ENCODE measurements at regions of chr18 and their contacts with region 1.

Region 1: GRCh38 chr18:50819728-50820378 is at the start of gene MRO:
- DNase-seq: peak; percentile 88 to 89
- H3K4me3 ChIP-seq: peak within 1 kb of the TSS in 2 of 3 donors; percentile 4 to 17
- H3K27ac ChIP-seq: peak within 1 kb of the TSS; percentile 71 to 87 (median 83)
- H3K4me1 ChIP-seq: peaks cover 41 to 46% of the 10 kb centered on the region in 2 donors
- H3K27me3 ChIP-seq: no peaks in the 10 kb centered on the region
- CTCF ChIP-seq: peak; percentile 58 to 97 (median 92)
- POLR2A ChIP-seq: no peak
- total RNA-seq, gene MRO: 3.9 to 13.3 (median 11.2) TPM

Region 2: DNA sequence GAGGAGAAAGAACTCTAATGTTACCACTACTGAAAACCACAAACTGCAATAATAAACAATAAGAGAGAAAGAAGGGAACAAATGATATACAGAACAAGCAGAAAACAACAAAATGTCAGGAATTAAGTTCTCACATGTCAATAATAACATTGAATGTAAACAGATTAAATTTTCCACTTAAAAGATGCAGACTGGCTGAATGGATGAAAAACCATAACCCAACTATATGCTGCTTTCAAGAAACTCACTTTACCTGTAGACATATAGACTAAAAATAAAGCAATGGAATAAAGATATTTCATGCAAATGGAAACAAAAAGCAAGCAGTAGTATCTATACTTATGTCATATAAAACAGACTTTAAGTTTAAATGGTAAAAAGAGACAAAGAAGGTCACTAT is 50.4 kb before region 1 on chr18:
- intact Hi-C with region 1: no loop called
- DNase-seq: no peak
- H3K4me3 ChIP-seq: no peak overlapping the region
- H3K27ac ChIP-seq: no peak overlapping the region
- H3K4me1 ChIP-seq: no peaks in the 10 kb centered on the region
- H3K27me3 ChIP-seq: no peaks in the 10 kb centered on the region
- CTCF ChIP-seq: no peak
- POLR2A ChIP-seq: no peak

Region 3: GRCh38 chr18:50944245-50944932 is 124.5 kb after region 1 on chr18:
- intact Hi-C with region 1: no loop called
- DNase-seq: no peak
- H3K4me3 ChIP-seq: no peak overlapping the region
- H3K27ac ChIP-seq: no peak overlapping the region
- H3K4me1 ChIP-seq: no peaks in the 10 kb centered on the region
- H3K27me3 ChIP-seq: no peaks in the 10 kb centered on the region
- CTCF ChIP-seq: no peak
- POLR2A ChIP-seq: no peak

Region 4: DNA sequence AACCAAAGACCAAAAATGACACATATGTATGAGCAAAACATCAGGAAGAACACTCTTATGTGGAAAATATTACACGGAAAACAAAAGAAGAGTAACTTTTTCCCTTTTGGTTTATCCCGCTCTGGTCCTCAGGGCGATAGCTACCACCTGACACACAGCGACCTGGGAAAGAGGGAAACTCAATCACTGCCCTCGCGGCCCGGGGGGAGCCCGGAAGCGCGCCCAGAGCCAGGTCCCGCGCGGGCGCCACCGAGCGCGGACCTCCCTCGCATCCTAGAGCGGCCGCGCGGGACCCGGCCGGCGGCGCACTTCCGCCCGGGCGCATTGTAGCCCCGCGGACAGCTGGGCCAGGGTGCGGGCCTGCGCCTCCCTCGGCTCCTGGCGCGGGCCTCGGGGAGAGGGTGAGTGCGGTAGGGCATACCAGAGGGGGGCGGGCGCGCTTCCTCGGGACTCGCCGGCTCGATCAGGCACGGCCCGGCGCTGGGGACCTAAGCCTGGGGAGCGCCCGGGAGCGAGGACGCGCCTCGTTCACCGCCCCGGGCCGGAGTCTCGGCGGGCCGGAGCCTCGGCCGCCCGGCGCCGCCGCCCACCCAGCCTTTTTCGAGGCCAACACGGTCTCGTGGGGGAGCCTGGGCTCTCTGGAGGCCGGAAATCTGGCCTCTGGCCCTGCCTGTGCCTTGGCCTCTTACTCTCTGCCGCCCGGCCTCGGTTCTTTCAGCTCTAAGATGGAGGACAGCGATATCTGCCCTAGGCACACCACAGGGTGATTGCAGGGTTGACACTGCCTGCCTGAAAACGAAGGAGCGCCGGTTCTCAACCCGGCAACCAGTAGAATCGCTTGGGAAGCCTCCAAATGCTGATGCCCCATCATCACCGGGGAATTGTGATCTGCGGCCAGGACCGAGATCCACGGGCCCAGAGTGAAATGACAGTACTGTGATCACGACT is 148.1 kb after region 1 on chr18 and contains the start of gene ELAC1:
- intact Hi-C with region 1: loop called (anchors 10 kb)
- DNase-seq: peak; percentile 75 to 82
- H3K4me3 ChIP-seq: peak within 1 kb of the TSS; percentile 91 to 94 (median 93)
- H3K27ac ChIP-seq: peak within 1 kb of the TSS; percentile 96 to 100 (median 99)
- H3K4me1 ChIP-seq: peaks cover 26 to 34% of the 10 kb centered on the region in 2 donors
- H3K27me3 ChIP-seq: no peaks in the 10 kb centered on the region
- CTCF ChIP-seq: no peak
- POLR2A ChIP-seq: peak; percentile 86 to 92
- total RNA-seq, gene ELAC1: 9.3 to 23.5 (median 16.3) TPM

Measured in thyroid gland (tissue), 4 donors.